Activated CD4-positive, alpha-beta T cell treated with anti-CD3 and anti-CD28 coated beads, Interleukin-2, amount 10 ng/mL, durations not matched to agents 7 days and 5 days (primary cell): ENCODE measurements at regions of chr5 and their contacts with region 1.

Region 1: GRCh38 chr5:132456296-132457001 is 34.1 kb downstream of the IRF1 start:
- DNase-seq: peak; percentile 82
- H3K4me3 Mint-ChIP-seq: peak overlapping the region; percentile 51
- H3K27ac Mint-ChIP-seq: peak overlapping the region; percentile 99
- H3K4me1 Mint-ChIP-seq: peaks cover 92% of the 10 kb centered on the region
- H3K27me3 Mint-ChIP-seq: no peaks in the 10 kb centered on the region

Region 2: DNA sequence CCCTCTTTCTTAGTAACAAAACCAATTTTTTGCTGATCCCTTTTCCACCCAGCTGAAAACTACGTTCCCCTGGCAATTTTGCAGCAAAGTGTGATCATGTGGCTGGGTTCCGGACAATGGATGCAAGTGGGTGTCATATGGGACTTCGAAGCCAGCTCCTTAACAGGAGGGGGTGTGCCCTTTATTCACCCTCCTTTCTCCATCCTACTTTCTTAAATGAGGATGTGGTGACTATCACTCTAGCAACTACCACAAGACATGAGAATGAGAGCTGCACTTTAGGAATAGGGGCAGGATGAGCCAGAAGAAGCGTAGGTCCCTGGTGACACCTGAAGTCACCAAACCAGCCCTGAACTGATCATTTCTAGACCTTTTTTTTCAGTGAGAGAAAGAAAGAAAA is 24.8 kb before region 1 on chr5:
- CTCF ChIA-PET with region 1: interaction called, 13 read pairs
- POLR2A ChIA-PET with region 1: interaction called, 3 read pairs
- DNase-seq: no peak
- H3K4me3 Mint-ChIP-seq: no peak overlapping the region
- H3K27ac Mint-ChIP-seq: peak overlapping the region; percentile 34
- H3K4me1 Mint-ChIP-seq: peaks cover 92% of the 10 kb centered on the region
- H3K27me3 Mint-ChIP-seq: no peaks in the 10 kb centered on the region

Region 3: GRCh38 chr5:132466433-132467286 is 10.2 kb after region 1 on chr5:
- CTCF ChIA-PET with region 1: interaction called, 43 read pairs
- POLR2A ChIA-PET with region 1: interaction called, 10 read pairs
- DNase-seq: peak; percentile 83
- H3K4me3 Mint-ChIP-seq: peak overlapping the region; percentile 67
- H3K27ac Mint-ChIP-seq: peak overlapping the region; percentile 87
- H3K4me1 Mint-ChIP-seq: peaks cover 96% of the 10 kb centered on the region
- H3K27me3 Mint-ChIP-seq: no peaks in the 10 kb centered on the region

Region 4: GRCh38 chr5:132479111-132479951 is 22.9 kb after region 1 on chr5:
- CTCF ChIA-PET with region 1: interaction called, 31 read pairs
- POLR2A ChIA-PET with region 1: interaction called, 8 read pairs
- DNase-seq: no peak
- H3K4me3 Mint-ChIP-seq: peak overlapping the region; percentile 3
- H3K27ac Mint-ChIP-seq: peak overlapping the region; percentile 73
- H3K4me1 Mint-ChIP-seq: peaks cover 73% of the 10 kb centered on the region
- H3K27me3 Mint-ChIP-seq: no peaks in the 10 kb centered on the region